Aorta (tissue), 5 donors: ENCODE measurements at regions of chr17 and their contacts with region 1.

Region 1: DNA sequence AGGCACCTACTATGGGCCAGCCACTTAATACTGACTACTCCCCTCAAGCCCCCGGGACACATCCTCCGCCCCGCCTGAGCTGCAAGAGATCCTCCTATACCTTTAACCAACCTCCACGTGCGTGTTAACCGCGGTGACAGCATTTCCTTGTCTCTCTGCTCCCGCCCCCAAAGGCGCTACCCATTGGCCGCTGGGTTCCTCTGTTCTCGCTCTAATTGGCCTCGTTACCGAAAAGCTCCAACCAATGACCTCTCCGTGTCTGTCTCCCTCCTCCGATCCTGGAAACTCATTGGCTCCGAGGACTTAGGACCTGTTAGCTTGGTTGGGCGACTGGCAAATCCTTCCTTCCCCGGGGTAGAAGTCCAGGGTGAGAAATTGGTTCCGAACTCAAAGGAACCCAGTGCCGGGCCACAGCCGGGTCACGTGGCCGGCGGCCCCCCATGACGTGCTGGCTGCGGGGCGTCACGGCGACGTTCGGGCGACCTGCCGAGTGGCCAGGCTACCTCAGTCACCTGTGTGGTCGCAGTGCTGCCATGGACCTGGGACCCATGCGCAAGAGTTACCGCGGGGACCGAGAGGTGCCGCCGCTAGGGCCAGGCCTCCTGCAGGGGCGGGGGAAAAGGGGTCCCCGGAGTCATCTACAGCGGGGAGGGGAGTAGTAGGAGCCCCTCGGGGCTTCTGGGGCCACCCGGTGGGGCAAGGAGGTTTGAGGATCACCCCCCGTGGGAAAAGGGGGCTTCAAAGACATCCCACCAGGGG is at the start of gene PNPO:
- DNase-seq: peak; percentile 96
- ATAC-seq: peak; percentile 95
- H3K4me3 ChIP-seq: peak within 1 kb of the TSS; percentile 71 to 82
- H3K27ac ChIP-seq: peak within 1 kb of the TSS; percentile 5 to 7
- H3K4me1 ChIP-seq: no peaks in the 10 kb centered on the region
- H3K27me3 ChIP-seq: no peaks in the 10 kb centered on the region
- total RNA-seq, gene PNPO: 14.3 to 19.5 TPM

Region 2: DNA sequence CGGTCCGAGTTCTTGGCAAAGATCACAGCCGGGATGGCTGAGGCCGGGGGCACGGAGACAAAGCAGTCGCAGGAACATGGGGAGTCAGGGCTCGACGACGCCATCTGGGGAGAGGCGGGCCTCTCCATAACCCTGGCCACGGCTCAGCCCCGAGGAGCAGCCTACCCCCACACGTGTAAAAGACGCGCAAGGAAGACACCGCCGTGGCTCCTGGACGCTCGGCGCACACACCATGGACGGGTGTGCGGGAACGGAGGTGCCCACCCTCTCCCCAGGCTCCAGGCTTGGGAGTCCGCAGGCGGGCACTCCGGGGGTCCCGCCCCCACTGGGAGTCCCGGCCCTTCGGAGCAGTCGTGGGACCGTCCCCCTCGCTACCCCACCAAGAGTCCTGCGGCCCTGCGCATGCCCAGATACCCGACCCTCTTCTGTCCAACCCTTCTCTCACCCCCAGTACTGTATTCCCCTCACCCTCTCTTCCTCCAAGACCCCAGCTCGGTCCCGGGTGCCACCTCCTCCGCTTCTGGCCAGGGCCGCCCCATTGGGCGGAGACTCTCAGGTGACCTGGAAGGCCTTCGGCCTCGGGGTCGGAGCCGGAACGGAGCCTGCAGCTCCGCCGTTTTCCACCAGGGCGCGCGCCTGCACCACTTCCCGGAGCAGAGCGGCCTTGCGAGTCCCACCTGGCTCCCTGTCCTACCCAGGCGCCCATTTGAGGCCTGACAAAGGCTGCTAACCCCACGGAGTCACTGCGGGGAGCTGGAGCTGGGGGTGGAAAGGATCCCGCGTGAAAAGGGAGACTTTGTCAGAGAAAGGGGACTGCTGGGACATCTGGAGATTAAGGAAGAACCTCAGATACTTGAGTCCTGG is 100.4 kb before region 1 on chr17 and contains the start of gene SCRN2:
- intact Hi-C with region 1: loop called in 1 of 2 experiments (anchors 2 kb)
- DNase-seq: peak; percentile 92 to 96
- ATAC-seq: peak; percentile 95
- H3K4me3 ChIP-seq: peak within 1 kb of the TSS; percentile 36 to 54
- H3K27ac ChIP-seq: no peak within 1 kb of the TSS
- H3K4me1 ChIP-seq: no peaks in the 10 kb centered on the region
- H3K27me3 ChIP-seq: no peaks in the 10 kb centered on the region
- total RNA-seq, gene SCRN2: 19.3 to 37.6 TPM

Region 3: GRCh38 chr17:47884905-47885733 is 56.3 kb before region 1 on chr17:
- intact Hi-C with region 1: no loop called
- DNase-seq: peak in 1 of 2 donors; percentile 67
- ATAC-seq: no peak
- H3K4me3 ChIP-seq: no peak overlapping the region
- H3K27ac ChIP-seq: no peak overlapping the region
- H3K4me1 ChIP-seq: no peaks in the 10 kb centered on the region
- H3K27me3 ChIP-seq: no peaks in the 10 kb centered on the region

Region 4: GRCh38 chr17:47895856-47896671 is 45.4 kb before region 1 on chr17 and contains the start of gene SP2:
- intact Hi-C with region 1: loop called (anchors 2 to 5 kb)
- DNase-seq: peak; percentile 99
- ATAC-seq: peak; percentile 97
- H3K4me3 ChIP-seq: peak within 1 kb of the TSS; percentile 92 to 97
- H3K27ac ChIP-seq: peak within 1 kb of the TSS; percentile 95 to 96
- H3K4me1 ChIP-seq: peaks cover 0 to 4% of the 10 kb centered on the region in 2 donors
- H3K27me3 ChIP-seq: no peaks in the 10 kb centered on the region
- total RNA-seq, gene SP2: 14.3 to 18.0 TPM

Region 5: GRCh38 chr17:47905221-47905781 is 36.1 kb before region 1 on chr17:
- intact Hi-C with region 1: loop called in 1 of 2 experiments (anchors 1 kb)
- DNase-seq: peak; percentile 89 to 91
- ATAC-seq: peak; percentile 87
- H3K4me3 ChIP-seq: no peak overlapping the region
- H3K27ac ChIP-seq: peak overlapping the region; percentile 84 to 91
- H3K4me1 ChIP-seq: peaks cover 0 to 23% of the 10 kb centered on the region in 2 donors
- H3K27me3 ChIP-seq: no peaks in the 10 kb centered on the region

Region 6: GRCh38 chr17:47970704-47971463 is 29.5 kb after region 1 on chr17 and contains the start of gene CDK5RAP3:
- intact Hi-C with region 1: loop called in 1 of 2 experiments (anchors 2 kb)
- DNase-seq: peak; percentile 100
- ATAC-seq: peak; percentile 100
- H3K4me3 ChIP-seq: peak within 1 kb of the TSS; percentile 52 to 55
- H3K27ac ChIP-seq: peak within 1 kb of the TSS in 1 of 2 donors; percentile 11
- H3K4me1 ChIP-seq: peaks cover 0 to 3% of the 10 kb centered on the region in 2 donors
- H3K27me3 ChIP-seq: no peaks in the 10 kb centered on the region
- total RNA-seq, gene CDK5RAP3: 99.5 to 196 TPM

Region 7: GRCh38 chr17:47987240-47987835 is 45.9 kb after region 1 on chr17:
- intact Hi-C with region 1: no loop called
- DNase-seq: no peak
- ATAC-seq: no peak
- H3K4me3 ChIP-seq: no peak overlapping the region
- H3K27ac ChIP-seq: no peak overlapping the region
- H3K4me1 ChIP-seq: no peaks in the 10 kb centered on the region
- H3K27me3 ChIP-seq: no peaks in the 10 kb centered on the region